Natural killer cell (primary cell): ENCODE measurements at regions of chr5 and their contacts with region 1.

Region 1: DNA sequence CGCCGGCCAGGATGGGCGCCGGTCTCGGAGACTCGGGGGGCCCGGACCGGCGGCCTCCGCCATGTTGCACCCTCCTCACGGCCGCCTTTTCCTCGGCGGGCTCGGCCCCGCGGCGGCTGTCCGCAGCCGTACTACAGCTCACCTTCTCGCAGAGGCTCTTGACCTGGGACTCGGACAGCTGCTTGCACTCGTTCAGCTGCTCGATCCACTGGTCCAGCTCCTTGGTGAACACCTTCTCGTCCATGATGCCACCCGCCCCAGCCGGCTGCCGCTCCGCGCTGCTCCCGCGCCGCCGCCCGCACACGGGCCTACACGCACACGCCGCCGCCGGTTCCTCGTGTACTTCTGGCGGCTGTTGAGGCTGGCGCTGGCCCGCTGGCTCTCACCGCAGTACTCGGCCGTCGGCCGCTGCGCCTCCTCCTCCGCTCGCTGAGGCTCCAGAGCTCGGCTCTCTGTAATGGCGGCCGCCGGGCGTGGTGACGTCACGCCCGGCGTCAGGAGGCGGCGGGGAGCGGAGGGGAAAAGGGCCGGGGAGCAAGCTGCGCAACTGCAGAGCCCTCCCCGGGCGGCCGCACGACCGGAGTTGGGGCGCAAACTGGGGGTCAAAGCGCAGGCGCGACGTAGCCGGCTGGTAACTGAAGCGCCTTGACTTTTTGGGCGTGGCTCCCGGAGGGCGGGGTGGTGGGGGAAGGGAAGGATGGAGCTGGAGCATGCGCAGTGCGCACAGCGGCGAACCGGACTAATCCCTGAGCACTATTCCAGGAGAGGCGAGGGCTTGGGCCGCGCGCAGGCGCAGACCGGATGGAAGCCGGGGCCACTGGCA is at the start of gene PPP2CA:
- DNase-seq: peak; percentile 98 to 100
- ATAC-seq: peak; percentile 80 to 92 (median 81)
- H3K4me3 ChIP-seq: peak within 1 kb of the TSS; percentile 79
- H3K4me3 Mint-ChIP-seq: peak within 1 kb of the TSS; percentile 97
- H3K27ac ChIP-seq: peak within 1 kb of the TSS; percentile 96
- H3K27ac Mint-ChIP-seq: peak within 1 kb of the TSS; percentile 96 to 100
- H3K4me1 ChIP-seq: peaks cover 20% of the 10 kb centered on the region
- H3K4me1 Mint-ChIP-seq: peaks cover 55 to 61% of the 10 kb centered on the region in 2 donors
- H3K27me3 ChIP-seq: no peaks in the 10 kb centered on the region
- H3K27me3 Mint-ChIP-seq: no peaks in the 10 kb centered on the region
- CTCF ChIP-seq: peak; percentile 23
- total RNA-seq, gene PPP2CA: 188 to 205 (median 191) TPM

Region 2: DNA sequence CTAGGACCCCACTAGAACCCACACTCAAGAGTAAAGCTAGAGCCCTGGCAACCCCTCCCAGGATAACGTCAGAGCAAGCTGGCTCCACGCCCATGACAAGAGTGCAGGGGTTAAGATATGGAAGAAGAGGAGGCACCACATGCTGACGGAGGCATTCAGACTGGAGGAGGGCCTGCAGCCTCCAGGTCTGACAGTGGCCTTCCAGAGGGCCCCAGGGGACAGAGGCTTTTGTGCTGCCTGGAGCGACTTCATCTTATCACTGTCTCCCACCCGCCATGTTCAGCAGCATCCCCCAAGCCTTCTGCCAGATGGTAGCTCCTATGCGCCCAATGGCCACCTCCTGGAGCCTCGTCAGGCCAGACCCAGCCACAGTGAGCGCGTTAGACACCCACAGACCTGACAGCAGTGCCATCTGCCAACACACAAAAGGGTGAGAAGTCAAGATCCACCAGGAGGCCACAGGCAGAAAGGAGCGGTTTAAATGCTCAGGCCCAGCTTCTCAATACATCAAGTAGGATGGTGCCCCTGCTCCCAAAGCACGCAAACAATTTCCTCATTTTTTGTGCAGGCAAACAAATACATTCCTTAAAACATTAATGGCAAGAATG is 323.2 kb before region 1 on chr5:
- intact Hi-C with region 1: no loop called
- DNase-seq: no peak
- ATAC-seq: no peak
- H3K4me3 ChIP-seq: no peak overlapping the region
- H3K4me3 Mint-ChIP-seq: no peak overlapping the region
- H3K27ac ChIP-seq: no peak overlapping the region
- H3K27ac Mint-ChIP-seq: no peak overlapping the region
- H3K4me1 ChIP-seq: no peaks in the 10 kb centered on the region
- H3K4me1 Mint-ChIP-seq: no peaks in the 10 kb centered on the region
- H3K27me3 ChIP-seq: no peaks in the 10 kb centered on the region
- H3K27me3 Mint-ChIP-seq: peaks cover 0 to 5% of the 10 kb centered on the region in 2 donors
- CTCF ChIP-seq: no peak

Region 3: DNA sequence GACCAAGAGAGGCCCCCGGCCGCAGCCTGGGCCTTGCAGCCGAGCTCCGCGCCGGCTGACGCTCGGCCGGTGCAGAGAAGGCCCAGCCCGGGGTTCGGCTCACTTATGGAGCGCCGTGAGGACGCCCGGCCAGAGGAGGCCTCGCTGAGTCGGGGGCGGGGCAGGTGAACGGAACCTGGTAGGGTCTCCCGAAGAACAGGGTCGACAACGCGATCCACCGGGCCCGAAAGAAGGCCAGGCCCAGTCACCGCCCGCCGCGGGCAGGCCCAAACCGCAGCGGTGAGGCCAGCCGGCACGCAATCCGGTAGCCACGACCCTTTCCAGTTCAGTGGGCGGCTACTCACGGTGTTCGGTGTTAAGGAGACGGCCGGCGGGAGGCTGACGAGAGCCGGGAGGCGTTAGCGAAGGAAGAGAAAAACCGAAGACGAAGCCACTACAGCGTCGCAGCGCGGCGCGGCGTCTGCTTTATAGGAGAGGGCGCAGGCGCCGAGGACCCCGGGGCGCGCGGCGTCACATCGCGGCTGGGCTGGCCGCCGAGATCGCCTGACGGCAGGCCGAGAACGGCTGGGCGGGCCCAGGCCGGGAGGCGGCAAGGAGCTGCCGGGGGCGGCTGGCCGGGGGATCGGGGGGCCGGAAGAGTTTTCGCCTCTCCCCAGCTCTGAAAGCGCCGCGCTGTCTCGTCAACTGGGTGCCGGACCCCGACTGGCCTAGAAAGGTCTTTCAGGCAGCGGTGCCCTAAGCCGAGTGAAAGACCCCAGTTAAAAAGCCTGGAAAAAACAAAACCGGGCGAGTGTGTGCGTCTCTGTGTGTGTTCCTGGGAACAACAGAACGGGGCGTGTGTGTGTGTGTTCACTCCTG is 49.1 kb before region 1 on chr5 and contains the start of gene SKP1:
- intact Hi-C with region 1: loop called (anchors 2 kb)
- DNase-seq: peak; percentile 88 to 93
- ATAC-seq: peak; percentile 88 to 95 (median 89)
- H3K4me3 ChIP-seq: peak within 1 kb of the TSS; percentile 100
- H3K4me3 Mint-ChIP-seq: peak within 1 kb of the TSS; percentile 89
- H3K27ac ChIP-seq: peak within 1 kb of the TSS; percentile 99
- H3K27ac Mint-ChIP-seq: peak within 1 kb of the TSS; percentile 92 to 97
- H3K4me1 ChIP-seq: peaks cover 12% of the 10 kb centered on the region
- H3K4me1 Mint-ChIP-seq: peaks cover 28 to 34% of the 10 kb centered on the region in 2 donors
- H3K27me3 ChIP-seq: no peaks in the 10 kb centered on the region
- H3K27me3 Mint-ChIP-seq: no peaks in the 10 kb centered on the region
- CTCF ChIP-seq: no peak
- total RNA-seq, gene SKP1: 301 to 338 (median 315) TPM

Region 4: DNA sequence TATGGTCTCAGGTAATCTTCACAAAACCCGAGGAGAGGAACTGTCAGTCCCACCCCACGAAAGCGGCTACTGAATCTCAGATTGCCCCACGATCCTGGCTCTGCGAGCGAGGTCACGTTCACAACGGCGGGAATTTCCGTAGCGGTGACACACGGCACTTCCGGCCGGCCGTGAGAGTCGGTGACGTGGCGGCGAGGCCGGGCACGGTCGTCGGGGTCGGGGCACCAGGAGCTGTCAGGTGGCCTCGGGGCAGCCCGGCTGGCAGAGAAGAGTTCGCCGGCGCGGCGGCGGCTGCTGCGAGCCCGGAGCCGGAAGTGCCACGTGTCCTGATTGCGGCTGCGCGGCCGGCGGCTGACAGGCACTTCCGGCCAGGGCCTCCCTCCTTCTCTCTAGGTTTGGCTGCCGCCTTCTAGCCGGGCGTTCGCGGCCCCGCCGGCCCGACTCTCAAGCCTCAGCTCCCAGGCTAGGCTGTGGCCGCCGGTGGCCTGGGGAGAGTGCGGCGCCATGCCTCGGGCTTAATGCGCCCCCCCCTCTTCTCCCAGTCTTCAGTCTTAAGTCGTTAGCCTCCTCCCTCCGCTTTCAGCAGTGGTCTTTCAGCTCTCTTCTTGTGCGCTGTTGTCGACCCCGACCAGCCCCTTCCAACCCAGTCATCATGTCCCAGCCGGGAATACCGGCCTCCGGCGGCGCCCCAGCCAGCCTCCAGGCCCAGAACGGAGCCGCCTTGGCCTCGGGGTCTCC is 422.8 kb after region 1 on chr5 and contains the start of gene SEC24A:
- intact Hi-C with region 1: loop called (anchors 1 kb)
- DNase-seq: peak; percentile 91 to 96
- ATAC-seq: peak; percentile 79 to 92 (median 86)
- H3K4me3 ChIP-seq: peak within 1 kb of the TSS; percentile 83
- H3K4me3 Mint-ChIP-seq: peak within 1 kb of the TSS; percentile 98
- H3K27ac ChIP-seq: peak within 1 kb of the TSS; percentile 97
- H3K27ac Mint-ChIP-seq: peak within 1 kb of the TSS; percentile 99
- H3K4me1 ChIP-seq: peaks cover 17% of the 10 kb centered on the region
- H3K4me1 Mint-ChIP-seq: peaks cover 22 to 26% of the 10 kb centered on the region in 2 donors
- H3K27me3 ChIP-seq: no peaks in the 10 kb centered on the region
- H3K27me3 Mint-ChIP-seq: no peaks in the 10 kb centered on the region
- CTCF ChIP-seq: no peak
- total RNA-seq, gene SEC24A: 20.9 to 26.1 (median 25.0) TPM